ENCODE measurements at regions of chr9 and their contacts with region 1.

Region 1: DNA sequence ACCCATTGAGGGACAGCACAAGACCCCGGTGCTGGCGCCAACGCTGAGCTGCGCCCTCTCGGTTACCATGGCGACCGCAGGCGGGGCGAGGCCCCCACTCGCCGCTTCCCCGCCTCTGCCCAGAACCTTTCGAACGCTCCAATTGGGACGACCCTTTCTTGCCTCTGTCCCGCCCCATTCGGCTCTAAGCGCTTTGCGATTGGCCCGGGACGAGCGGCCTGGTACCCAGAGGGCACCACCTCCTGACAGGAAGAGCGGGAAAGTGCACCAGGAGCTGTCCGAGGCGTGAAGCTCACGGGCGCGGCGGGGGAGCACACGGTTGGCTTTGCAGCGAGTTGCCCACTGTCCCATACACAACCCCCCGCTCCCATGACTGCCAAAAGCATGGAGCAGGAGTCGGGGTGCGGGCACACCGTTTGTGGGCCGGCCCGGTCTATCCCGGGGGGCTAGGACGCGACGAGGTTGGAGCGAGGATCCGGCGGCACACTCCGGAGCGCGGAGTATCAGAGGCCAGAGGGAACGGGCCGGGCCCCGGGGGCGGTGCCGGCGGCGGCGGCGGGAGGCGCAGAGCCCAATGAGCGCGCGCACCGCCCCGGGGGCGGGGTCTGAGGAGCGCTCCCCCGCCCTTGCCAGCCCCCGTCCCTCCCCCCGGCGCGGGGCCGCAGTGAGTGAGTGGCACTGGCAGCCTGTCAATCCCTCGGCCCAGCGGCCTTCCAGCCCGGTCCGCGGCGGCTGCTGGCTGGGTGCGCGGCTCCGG is 978 bp upstream of the PBX3 start:
- DNase-seq: peak; percentile 86
- ATAC-seq: peak; percentile 87
- H3K4me3 ChIP-seq: peak overlapping the region; percentile 99
- H3K27ac ChIP-seq: peak overlapping the region; percentile 59; the same call in 1 of the 2 replicates
- H3K4me1 ChIP-seq: peaks cover 6% of the 10 kb centered on the region
- H3K27me3 ChIP-seq: no peaks in the 10 kb centered on the region
- CTCF ChIP-seq: no peak
- POLR2A ChIP-seq: no peak
- RAD21 ChIP-seq: no peak

Region 2: DNA sequence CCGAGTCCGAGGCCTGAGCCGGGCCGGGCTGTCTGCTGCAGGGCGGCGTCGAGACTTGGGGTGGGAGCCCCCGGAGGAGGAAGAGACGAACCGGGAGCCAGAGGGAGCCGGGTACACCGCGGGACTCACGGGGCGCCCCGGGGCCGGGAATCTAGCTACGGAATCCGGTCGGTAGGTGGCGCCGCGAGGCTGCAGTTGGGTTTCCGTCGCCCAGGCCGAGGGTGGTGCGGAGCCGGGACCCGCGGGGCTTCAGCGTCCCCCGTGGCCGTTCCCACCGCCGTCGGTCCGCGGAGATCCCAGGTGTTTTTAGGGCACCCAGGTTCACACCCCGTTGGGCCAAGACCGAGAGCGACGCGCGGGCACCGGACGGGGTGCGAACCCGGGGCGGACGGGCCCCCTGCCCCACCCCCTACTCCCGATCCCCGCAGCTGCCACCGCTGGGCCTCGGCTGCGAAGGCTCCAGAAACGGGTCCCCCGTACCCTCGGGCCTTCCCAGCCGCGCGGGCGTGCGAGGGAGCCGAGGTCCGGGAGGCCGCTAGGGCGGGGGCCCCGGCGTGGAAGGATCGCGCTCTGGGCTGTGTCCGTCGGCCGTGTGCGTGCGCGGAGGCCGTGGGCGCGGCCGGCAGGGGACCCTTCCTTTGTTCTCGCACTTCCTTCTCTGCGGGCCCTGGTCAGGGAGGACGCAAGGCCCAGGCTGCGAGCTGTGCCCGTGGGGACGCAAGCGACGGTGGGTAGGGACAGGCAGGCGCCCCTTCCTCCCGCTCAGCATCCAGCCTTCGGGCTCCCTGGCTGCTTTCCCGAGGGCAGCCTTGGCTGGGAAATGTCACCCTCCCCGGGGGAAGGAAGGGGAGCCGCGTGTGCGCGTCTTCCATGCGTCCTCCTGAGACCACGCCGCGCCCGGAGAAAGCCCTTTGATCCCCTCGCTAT is 338.0 kb before region 1 on chr9:
- CTCF ChIA-PET with region 1: no interaction called
- POLR2A ChIA-PET with region 1: no interaction called
- dilution Hi-C with region 1: no loop called
- in situ Hi-C with region 1: no loop called
- intact Hi-C with region 1: loop called (anchors 2 kb)
- DNase-seq: peak; percentile 56
- ATAC-seq: peak; percentile 93
- H3K4me3 ChIP-seq: peak overlapping the region; percentile 82
- H3K27ac ChIP-seq: peak overlapping the region; percentile 69
- H3K4me1 ChIP-seq: peaks cover 3% of the 10 kb centered on the region; the same call in 1 of the 2 replicates
- H3K27me3 ChIP-seq: no peaks in the 10 kb centered on the region
- CTCF ChIP-seq: peak; percentile 95
- POLR2A ChIP-seq: 0 out of 2 replicates have a peak, but pooled peaks have one; percentile 51
- RAD21 ChIP-seq: peak; percentile 96

Region 3: DNA sequence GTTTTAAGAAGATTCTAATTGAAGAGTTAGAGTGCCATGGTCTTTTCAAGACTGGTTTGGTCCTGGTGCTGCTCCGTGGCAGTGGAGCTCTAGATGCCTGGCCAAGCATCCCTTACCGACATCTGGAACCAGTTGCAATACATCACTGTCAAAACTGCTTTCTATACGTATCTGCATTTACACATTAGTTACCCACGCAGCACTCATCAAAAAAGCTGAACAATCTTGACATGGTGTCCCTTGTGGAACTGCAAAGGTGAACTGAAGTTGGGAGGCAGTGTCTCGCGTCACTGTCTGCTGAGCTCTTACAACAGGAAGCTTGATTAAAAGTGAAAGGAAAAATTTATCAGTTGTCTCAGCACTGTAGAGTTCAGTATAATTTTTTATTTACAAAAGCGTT is 83.5 kb after region 1 on chr9:
- CTCF ChIA-PET with region 1: no interaction called
- POLR2A ChIA-PET with region 1: interaction called, 3 read pairs
- dilution Hi-C with region 1: no loop called
- in situ Hi-C with region 1: no loop called
- intact Hi-C with region 1: loop called (anchors 5 kb)
- DNase-seq: peak; percentile 12
- ATAC-seq: 0 out of 2 replicates have a peak, but pooled peaks have one; percentile 14
- H3K4me3 ChIP-seq: peak overlapping the region; percentile 51; the same call in 1 of the 2 replicates
- H3K27ac ChIP-seq: no peak overlapping the region
- H3K4me1 ChIP-seq: peaks cover 4% of the 10 kb centered on the region
- H3K27me3 ChIP-seq: no peaks in the 10 kb centered on the region
- CTCF ChIP-seq: no peak
- POLR2A ChIP-seq: no peak
- RAD21 ChIP-seq: no peak

Region 4: GRCh38 chr9:126055381-126055985 is 309.3 kb after region 1 on chr9:
- CTCF ChIA-PET with region 1: no interaction called
- POLR2A ChIA-PET with region 1: no interaction called
- dilution Hi-C with region 1: no loop called
- in situ Hi-C with region 1: no loop called
- intact Hi-C with region 1: loop called (anchors 10 kb)
- DNase-seq: peak; percentile 17
- ATAC-seq: no peak
- H3K4me3 ChIP-seq: no peak overlapping the region
- H3K27ac ChIP-seq: no peak overlapping the region
- H3K4me1 ChIP-seq: no peaks in the 10 kb centered on the region; the same call in 1 of the 2 replicates
- H3K27me3 ChIP-seq: peaks cover 79% of the 10 kb centered on the region
- CTCF ChIP-seq: no peak
- POLR2A ChIP-seq: no peak
- RAD21 ChIP-seq: no peak

Region 5: GRCh38 chr9:126490871-126491567 is 744.8 kb after region 1 on chr9:
- CTCF ChIA-PET with region 1: no interaction called
- POLR2A ChIA-PET with region 1: no interaction called
- dilution Hi-C with region 1: no loop called
- in situ Hi-C with region 1: no loop called
- intact Hi-C with region 1: loop called (anchors 10 kb)
- DNase-seq: peak; percentile 69
- ATAC-seq: peak; percentile 91
- H3K4me3 ChIP-seq: no peak overlapping the region
- H3K27ac ChIP-seq: no peak overlapping the region
- H3K4me1 ChIP-seq: no peaks in the 10 kb centered on the region
- H3K27me3 ChIP-seq: no peaks in the 10 kb centered on the region
- CTCF ChIP-seq: peak; percentile 92
- POLR2A ChIP-seq: 0 out of 2 replicates have a peak, but pooled peaks have one; percentile 34
- RAD21 ChIP-seq: peak; percentile 95

Measured in IMR-90 (cell line).